PC-9 (cell line): ENCODE measurements at regions of chr4 and their contacts with region 1.

Region 1: DNA sequence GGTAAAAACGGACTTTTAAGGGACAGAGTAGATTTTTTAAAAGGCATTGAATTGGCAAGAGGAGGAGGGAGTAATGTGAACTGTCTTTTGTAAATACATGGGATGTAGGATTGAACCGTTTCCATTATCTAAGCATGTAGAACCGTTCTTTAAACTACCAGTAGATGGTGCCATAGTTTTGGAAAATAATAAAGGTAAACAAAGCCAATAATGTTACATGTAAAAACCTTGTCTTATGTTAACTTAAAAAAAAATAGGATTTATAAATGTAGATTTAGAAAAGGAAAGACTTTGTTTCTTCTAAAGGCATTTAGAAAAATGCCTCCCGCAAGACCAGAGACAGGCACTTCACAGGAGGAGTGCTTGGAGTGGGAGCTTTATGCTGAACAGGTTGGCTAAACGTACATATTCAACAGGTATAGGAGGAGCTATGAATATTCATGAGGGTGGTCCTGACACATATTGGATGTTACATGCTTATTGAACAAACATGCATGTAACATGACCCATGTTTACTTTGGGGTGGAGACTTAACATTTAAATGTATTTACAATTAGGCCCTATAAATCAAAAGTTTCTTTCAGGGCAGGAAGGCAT is 45.5 kb upstream of the FAM241A start:
- DNase-seq: peak in 1 of 2 experiments; percentile 63
- H3K4me3 ChIP-seq: no peak overlapping the region
- H3K27ac ChIP-seq: no peak overlapping the region
- H3K4me1 ChIP-seq: peaks cover 5% of the 10 kb centered on the region; the same call in 1 of the 2 replicates
- H3K27me3 ChIP-seq: no peaks in the 10 kb centered on the region
- CTCF ChIP-seq: peak; percentile 87

Region 2: GRCh38 chr4:112031712-112032328 is 68.0 kb before region 1 on chr4:
- CTCF ChIA-PET with region 1: no interaction called
- POLR2A ChIA-PET with region 1: no interaction called
- intact Hi-C with region 1: no loop called
- DNase-seq: peak; percentile 20 to 46
- H3K4me3 ChIP-seq: no peak overlapping the region
- H3K27ac ChIP-seq: no peak overlapping the region
- H3K4me1 ChIP-seq: no peaks in the 10 kb centered on the region
- H3K27me3 ChIP-seq: no peaks in the 10 kb centered on the region
- CTCF ChIP-seq: peak; percentile 88

Region 3: GRCh38 chr4:112189754-112190153 is 90.0 kb after region 1 on chr4:
- CTCF ChIA-PET with region 1: interaction called, 3 read pairs
- POLR2A ChIA-PET with region 1: interaction called, 3 read pairs
- intact Hi-C with region 1: loop called (anchors 1 kb)
- DNase-seq: peak in 1 of 2 experiments; percentile 44
- H3K4me3 ChIP-seq: no peak overlapping the region
- H3K27ac ChIP-seq: peak overlapping the region; percentile 6; the same call in 1 of the 2 replicates
- H3K4me1 ChIP-seq: no peaks in the 10 kb centered on the region
- H3K27me3 ChIP-seq: no peaks in the 10 kb centered on the region
- CTCF ChIP-seq: peak; percentile 47

Region 4: GRCh38 chr4:112327965-112328733 is 228.3 kb after region 1 on chr4:
- CTCF ChIA-PET with region 1: no interaction called
- POLR2A ChIA-PET with region 1: no interaction called
- intact Hi-C with region 1: loop called (anchors 10 kb)
- DNase-seq: peak in 1 of 2 experiments; percentile 39
- H3K4me3 ChIP-seq: no peak overlapping the region
- H3K27ac ChIP-seq: no peak overlapping the region
- H3K4me1 ChIP-seq: no peaks in the 10 kb centered on the region
- H3K27me3 ChIP-seq: no peaks in the 10 kb centered on the region
- CTCF ChIP-seq: peak; percentile 71